ENCODE measurements at regions of chr12 and their contacts with region 1.

Region 1: GRCh38 chr12:111685744-111686517 is at the starts of genes ACAD10 and BRAP:
- DNase-seq: peak; percentile 90 to 95
- H3K4me3 ChIP-seq: peak within 1 kb of the TSS; percentile 88
- H3K27ac ChIP-seq: peak within 1 kb of the TSS; percentile 54
- H3K4me1 ChIP-seq: peaks cover 18% of the 10 kb centered on the region; the same call in 1 of the 2 replicates
- H3K27me3 ChIP-seq: no peaks in the 10 kb centered on the region
- CTCF ChIP-seq: no peak
- total RNA-seq, gene ACAD10: 29.1 and 30.3 TPM in 2 replicates
- total RNA-seq, gene BRAP: 13.2 and 15.8 TPM in 2 replicates

Region 2: DNA sequence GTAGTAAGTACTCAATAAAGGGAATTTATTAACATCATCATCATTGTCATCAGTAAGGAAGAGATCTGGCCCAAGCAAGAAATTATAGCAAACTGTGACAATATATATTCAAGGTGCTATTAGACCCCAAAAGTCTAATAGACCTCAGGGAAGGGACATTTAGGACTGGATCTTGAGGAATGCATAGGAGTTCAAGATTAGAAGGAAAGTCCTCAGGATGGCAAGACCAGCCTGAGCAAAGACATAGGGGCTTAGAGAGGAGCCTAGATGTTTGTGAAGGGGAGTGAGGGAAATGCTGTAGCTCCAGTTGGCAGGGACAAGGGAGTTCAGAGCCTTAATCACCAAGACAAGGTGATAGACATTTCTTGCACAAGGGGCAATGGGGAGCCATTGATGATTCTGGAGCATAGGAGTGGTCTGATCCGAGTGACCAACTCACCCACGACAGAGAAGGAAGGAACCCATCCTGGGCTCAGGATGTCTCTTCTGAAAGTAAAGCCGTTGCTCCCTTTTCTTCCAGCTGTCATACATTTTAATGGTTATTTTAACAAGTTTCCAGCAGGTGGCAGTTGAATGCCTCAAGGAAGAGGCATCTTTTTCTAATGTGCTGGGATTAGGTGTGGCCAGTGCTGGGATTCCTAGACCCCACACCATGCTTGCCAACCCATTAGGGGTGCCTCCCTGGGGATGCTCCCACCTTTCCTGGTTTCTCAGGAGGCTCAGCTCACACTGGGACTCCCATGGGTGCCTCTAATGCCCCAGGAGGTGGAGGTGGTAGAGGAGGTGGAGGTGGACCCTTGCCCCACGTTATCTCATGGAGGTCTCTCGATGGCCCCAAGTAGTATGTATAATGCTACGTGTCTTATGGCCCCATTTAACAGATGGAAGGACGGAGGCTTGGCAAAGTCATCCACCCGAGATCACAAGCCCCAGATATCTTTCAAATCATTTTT is 354.9 kb before region 1 on chr12:
- CTCF ChIA-PET with region 1: interaction called, 10 read pairs
- POLR2A ChIA-PET with region 1: interaction called, 4 read pairs
- intact Hi-C with region 1: no loop called
- DNase-seq: no peak
- H3K4me3 ChIP-seq: no peak overlapping the region
- H3K27ac ChIP-seq: no peak overlapping the region
- H3K4me1 ChIP-seq: no peaks in the 10 kb centered on the region
- H3K27me3 ChIP-seq: no peaks in the 10 kb centered on the region
- CTCF ChIP-seq: peak; percentile 47; the same call in 1 of the 2 replicates

Region 3: DNA sequence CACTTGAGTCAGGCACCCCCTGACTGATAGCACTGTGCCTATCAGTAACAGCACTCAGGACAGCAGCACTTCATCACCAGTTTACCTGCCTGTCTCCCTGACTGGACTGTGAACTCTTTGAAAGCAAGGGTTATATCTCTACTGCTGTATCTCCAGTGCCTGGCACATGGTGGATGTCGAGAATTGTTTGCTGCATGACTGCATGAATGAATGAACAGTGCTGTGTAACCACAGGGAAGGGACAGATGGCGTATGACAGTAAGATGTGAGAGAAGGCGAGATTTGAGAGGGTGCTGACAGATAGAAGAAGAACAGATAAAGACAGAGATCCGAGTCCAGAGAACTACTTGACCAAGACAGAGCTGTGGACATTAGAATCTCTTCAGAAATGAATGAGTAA is 29.9 kb before region 1 on chr12:
- CTCF ChIA-PET with region 1: interaction called, 13 read pairs
- POLR2A ChIA-PET with region 1: interaction called, 6 read pairs
- intact Hi-C with region 1: no loop called
- DNase-seq: no peak
- H3K4me3 ChIP-seq: no peak overlapping the region
- H3K27ac ChIP-seq: no peak overlapping the region
- H3K4me1 ChIP-seq: no peaks in the 10 kb centered on the region
- H3K27me3 ChIP-seq: no peaks in the 10 kb centered on the region
- CTCF ChIP-seq: no peak

Region 4: DNA sequence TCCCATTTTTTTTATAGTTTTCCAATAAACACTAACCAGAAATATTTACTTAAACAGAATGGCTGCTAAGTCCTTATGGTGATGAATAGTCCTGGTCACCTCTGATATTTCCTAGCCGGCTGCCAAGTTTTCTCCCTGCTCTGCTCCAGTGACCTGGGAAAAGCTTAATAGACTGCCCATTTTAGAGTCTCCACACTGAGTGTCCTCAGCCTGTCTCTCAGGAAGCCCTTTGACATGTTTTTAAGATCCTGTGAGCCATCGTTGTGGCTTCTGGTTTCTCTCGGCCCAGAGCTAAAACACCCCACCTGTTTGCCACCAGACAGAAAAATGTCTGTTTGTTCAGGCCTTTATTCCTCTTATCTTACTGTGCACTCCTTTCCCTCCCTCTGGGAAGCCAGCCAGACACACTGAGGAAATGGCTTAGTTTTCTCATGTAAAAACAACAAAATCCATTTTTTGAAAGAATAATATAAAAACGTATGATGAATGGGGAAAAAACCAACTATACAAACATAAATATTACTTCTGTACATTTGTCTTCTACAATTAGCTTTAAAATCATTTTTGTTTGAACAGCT is 55.4 kb after region 1 on chr12:
- CTCF ChIA-PET with region 1: no interaction called
- POLR2A ChIA-PET with region 1: no interaction called
- intact Hi-C with region 1: no loop called
- DNase-seq: no peak
- H3K4me3 ChIP-seq: no peak overlapping the region
- H3K27ac ChIP-seq: no peak overlapping the region
- H3K4me1 ChIP-seq: no peaks in the 10 kb centered on the region
- H3K27me3 ChIP-seq: no peaks in the 10 kb centered on the region
- CTCF ChIP-seq: no peak

Region 5: DNA sequence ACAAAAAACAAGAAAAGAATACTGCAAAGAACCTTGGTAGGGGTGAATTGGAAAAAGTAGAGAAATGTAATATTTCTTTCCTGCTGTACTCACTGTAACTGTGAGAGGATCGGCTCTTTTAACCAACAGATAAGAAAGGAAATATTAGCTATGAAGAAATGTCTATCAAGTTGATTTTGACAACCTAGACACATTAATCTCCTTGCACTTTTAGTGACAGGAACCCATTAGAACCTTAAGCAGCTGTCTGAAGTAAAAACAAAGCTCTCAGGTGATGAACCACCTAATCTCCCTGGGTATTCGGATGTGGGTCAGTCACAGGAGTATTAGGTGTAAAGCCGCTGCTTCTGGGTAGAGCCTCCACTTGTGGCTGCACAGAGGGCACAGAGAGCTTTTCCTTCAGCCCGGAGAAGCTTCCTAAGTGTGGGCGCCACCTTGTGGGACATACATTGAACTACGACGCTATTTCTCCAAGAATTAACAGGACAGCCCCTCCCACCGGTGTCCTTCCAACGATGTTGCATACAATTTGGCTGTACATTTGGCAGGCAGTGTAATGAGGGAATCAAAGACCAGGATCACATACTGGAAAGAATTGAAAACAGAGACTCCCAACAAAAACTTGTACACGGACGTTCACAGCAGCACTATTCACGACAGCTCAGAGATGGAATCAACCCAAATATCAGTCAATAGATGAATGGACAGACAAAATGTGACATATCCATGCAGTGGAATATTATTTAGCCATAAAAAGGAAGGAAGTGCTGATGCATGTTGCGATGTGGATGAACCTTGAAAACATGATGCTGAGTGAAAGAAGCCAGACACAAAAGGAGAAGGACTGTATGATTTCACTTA is 127.2 kb after region 1 on chr12:
- CTCF ChIA-PET with region 1: no interaction called
- POLR2A ChIA-PET with region 1: no interaction called
- intact Hi-C with region 1: loop called (anchors 2 kb)
- DNase-seq: peak; percentile 59 to 69
- H3K4me3 ChIP-seq: no peak overlapping the region
- H3K27ac ChIP-seq: no peak overlapping the region
- H3K4me1 ChIP-seq: no peaks in the 10 kb centered on the region
- H3K27me3 ChIP-seq: peaks cover 4% of the 10 kb centered on the region; the same call in 1 of the 2 replicates
- CTCF ChIP-seq: peak; percentile 84

Region 6: DNA sequence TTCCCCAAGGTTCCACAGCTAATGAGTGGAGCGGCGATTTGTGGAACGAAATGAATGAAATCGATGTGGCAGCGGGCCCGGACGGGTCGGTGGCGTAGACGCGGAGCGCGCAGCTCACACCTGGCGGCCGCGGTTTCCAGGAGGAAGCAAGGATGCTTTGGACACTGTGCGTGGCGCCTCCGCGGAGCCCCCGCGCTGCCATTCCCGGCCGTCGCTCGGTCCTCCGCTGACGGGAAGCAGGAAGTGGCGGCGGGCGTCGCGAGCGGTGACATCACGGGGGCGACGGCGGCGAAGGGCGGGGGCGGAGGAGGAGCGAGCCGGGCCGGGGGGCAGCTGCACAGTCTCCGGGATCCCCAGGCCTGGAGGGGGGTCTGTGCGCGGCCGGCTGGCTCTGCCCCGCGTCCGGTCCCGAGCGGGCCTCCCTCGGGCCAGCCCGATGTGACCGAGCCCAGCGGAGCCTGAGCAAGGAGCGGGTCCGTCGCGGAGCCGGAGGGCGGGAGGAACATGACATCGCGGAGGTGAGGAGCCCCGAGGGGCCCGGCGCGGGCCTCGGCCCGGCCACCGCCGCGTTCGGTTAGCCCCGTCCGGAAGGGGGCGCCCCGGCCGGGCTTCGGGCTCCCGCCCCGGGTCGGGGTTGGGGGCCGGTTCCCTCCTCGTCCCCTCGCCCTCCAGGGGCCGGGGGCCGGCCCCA is 732.8 kb after region 1 on chr12 and contains the start of gene PTPN11:
- CTCF ChIA-PET with region 1: no interaction called
- POLR2A ChIA-PET with region 1: no interaction called
- intact Hi-C with region 1: loop called (anchors 5 kb)
- DNase-seq: peak; percentile 56 to 88
- H3K4me3 ChIP-seq: peak within 1 kb of the TSS; percentile 96
- H3K27ac ChIP-seq: peak within 1 kb of the TSS; percentile 82
- H3K4me1 ChIP-seq: peaks cover 13% of the 10 kb centered on the region
- H3K27me3 ChIP-seq: no peaks in the 10 kb centered on the region
- CTCF ChIP-seq: peak; percentile 56; the same call in 1 of the 2 replicates
- total RNA-seq, gene PTPN11: 91.2 and 113 TPM in 2 replicates

Measured in PC-9 (cell line).